ENCODE measurements at regions of chr7 and their contacts with region 1.

Region 1: DNA sequence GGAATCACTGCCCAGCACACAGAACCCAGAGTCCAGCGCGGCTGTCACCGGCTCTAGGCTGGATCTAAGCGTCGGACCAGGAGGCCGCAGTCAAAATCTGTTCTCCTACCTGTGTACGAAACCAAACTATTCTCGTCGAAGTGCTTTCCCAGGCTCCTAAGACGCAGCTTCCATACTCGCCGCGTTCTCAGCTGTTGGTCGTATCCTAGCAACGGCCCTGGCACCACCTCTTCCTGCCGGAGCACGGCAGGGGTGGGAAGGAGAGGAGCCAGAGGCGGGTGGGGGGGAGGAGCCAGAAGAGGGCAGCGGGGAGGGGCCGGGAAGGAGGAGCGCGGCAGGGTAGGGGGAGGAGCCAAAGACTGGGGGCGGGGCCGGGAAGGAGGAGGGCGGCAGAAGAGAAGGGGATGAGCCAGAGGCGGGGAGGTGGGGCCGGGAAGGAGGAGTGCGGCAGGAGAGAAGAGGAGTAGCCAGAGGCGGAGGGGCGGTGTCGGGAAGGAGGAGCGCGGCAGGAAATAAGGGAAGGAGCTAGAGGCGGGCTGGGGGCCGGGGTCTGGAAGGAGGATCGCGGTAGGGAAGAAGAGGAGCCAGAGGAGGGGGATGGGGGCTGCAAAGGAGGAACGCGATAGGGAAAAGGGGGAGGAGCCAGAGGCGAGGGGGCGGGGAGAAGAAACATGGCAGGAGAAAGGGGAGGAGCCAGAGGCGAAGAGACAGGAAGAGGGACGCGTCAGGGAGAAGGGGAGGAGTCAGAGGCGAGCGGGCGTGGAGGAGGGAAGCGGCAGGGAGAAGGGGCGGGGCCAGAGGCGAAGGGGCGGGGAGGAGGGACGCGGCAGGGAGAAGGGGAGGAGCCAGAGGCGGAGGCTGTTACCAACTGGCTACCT is at the start of gene IQUB:
- DNase-seq: peak; percentile 99
- H3K4me3 ChIP-seq: peak within 1 kb of the TSS; percentile 61 to 66 (median 62)
- H3K27ac ChIP-seq: peak within 1 kb of the TSS; percentile 82 to 88 (median 86)
- H3K4me1 ChIP-seq: peaks cover 0 to 18% (median 6%) of the 10 kb centered on the region in 4 donors
- H3K27me3 ChIP-seq: no peaks in the 10 kb centered on the region
- CTCF ChIP-seq: no peak
- EP300 ChIP-seq: no peak
- POLR2A ChIP-seq: peak in 1 of 2 donors; percentile 48
- total RNA-seq, gene IQUB: 0.27 to 0.83 (median 0.69) TPM

Region 2: DNA sequence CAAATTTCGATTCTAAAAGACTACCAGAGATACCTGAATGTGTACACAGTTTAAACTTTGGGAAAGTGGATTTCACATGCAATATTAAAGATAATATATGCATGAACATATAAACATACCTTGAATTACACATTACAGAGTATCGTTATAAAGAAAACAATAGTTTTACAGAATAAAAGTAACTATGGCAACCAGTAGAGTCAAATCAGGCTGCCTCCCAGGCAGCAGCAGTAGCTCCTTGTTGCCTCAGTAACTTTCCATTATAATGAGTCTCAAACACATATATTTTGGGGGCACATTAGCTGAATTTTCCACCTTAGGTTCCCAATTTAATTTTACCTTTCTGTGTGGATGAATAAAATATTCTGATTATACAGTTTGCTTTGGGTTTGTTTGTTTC is 1065.7 kb before region 1 on chr7:
- intact Hi-C with region 1: no loop called
- DNase-seq: no peak
- H3K4me3 ChIP-seq: no peak overlapping the region
- H3K27ac ChIP-seq: no peak overlapping the region
- H3K4me1 ChIP-seq: no peaks in the 10 kb centered on the region
- H3K27me3 ChIP-seq: no peaks in the 10 kb centered on the region
- CTCF ChIP-seq: no peak
- EP300 ChIP-seq: no peak
- POLR2A ChIP-seq: no peak

Region 3: DNA sequence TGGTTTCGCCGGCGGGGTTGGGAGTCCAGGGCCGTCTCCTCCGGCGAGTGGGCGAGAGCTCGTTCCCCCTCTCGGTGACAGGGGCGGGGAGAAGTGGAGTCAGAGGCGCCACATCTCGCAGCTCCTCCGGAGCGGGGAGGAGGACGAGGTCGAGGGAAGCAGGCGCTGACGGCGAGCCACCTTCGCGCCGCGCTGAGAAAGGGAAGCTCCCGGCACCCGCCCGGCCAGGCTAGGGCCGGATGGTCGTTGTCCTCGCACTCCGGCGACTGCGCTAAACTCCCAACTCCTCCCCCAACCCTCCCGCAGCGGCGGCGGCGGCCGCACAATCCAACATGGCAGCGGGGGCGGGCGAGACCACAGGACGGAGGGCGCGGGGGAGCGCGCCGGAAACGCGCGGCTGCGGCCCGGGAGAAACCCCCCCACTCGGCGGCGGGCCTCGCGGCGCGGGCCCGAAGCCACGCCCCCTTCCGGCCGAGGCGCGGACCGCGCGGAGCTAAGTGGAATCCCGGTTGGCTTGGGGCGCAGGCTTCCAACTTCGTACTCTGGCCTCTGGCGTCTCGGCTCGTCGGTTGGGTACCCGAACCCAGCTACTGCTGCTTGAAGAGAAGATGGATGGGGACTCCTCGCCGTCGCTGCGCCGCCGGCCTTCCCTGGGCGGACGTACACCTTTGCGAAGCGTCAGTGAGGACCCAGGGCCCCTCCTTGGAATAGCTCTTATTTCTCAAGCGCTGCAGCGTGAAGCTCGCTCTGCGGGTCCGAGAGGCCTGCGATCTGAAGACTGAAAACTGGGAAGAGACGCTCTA is 214.3 kb after region 1 on chr7 and contains the start of gene WASL:
- intact Hi-C with region 1: loop called (anchors 5 kb)
- DNase-seq: peak; percentile 96
- H3K4me3 ChIP-seq: peak within 1 kb of the TSS; percentile 66 to 94 (median 81)
- H3K27ac ChIP-seq: peak within 1 kb of the TSS; percentile 90 to 99 (median 98)
- H3K4me1 ChIP-seq: peaks cover 2 to 61% (median 51%) of the 10 kb centered on the region in 4 donors
- H3K27me3 ChIP-seq: no peaks in the 10 kb centered on the region
- CTCF ChIP-seq: no peak
- EP300 ChIP-seq: peak in 2 of 4 donors; percentile 3 to 16
- POLR2A ChIP-seq: peak; percentile 89 to 92
- total RNA-seq, gene WASL: 32.4 to 45.3 (median 39.0) TPM

Region 4: GRCh38 chr7:124929467-124930172 is 1395.0 kb after region 1 on chr7 and contains the start of gene POT1:
- intact Hi-C with region 1: loop called (anchors 10 kb)
- DNase-seq: peak; percentile 100
- H3K4me3 ChIP-seq: peak within 1 kb of the TSS; percentile 46 to 70 (median 58)
- H3K27ac ChIP-seq: peak within 1 kb of the TSS; percentile 86 to 91 (median 87)
- H3K4me1 ChIP-seq: peaks cover 0 to 18% (median 12%) of the 10 kb centered on the region in 4 donors
- H3K27me3 ChIP-seq: no peaks in the 10 kb centered on the region
- CTCF ChIP-seq: no peak
- EP300 ChIP-seq: peak in 1 of 4 donors; percentile 67
- POLR2A ChIP-seq: no peak
- total RNA-seq, gene POT1: 18.9 to 26.2 (median 24.4) TPM

Measured in sigmoid colon (tissue), 7 donors.